AG04450 (cell line): ENCODE measurements at regions of chr1 and their contacts with region 1.

Region 1: DNA sequence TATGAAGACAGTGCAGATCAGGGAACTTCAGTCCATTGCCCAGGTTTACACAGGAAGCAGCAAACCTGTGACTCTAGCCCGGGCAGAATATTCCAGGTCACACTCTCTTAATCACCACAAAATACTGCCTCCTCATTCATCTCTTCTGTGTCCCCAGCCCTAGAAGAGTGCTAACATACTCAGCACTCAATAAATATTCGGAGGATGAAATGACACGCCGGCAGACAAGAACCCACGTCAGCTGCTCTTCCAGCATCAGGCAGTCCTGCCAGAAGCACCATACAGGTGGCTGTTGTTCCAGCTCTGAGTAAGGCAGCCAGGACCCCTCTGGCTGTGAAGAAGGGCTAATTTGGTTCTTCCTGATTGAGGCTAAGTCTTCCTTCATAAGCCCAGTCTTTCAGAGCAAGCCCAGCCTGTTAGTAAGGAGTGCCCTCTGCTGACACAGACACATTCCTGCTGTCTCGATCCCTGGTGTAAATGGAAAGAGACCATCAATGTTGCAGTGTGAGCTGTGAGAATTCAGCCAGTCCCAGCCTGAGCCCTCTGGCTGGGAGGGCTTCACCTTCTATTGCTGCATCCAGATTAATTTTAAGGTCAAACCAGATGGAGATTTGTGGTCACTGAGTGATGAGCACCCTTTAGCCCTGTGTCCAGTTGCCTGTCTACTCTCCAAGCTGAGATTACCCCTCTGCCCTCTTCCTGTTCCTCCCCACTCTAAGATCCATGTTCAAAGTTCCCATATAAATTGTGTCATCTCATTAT is 45.0 kb upstream of the KIRREL1 start:
- DNase-seq: no peak
- H3K4me3 ChIP-seq: no peak overlapping the region
- H3K27ac ChIP-seq: no peak overlapping the region
- H3K27me3 ChIP-seq: peaks cover 11% of the 10 kb centered on the region
- CTCF ChIP-seq: peak; percentile 63

Region 2: DNA sequence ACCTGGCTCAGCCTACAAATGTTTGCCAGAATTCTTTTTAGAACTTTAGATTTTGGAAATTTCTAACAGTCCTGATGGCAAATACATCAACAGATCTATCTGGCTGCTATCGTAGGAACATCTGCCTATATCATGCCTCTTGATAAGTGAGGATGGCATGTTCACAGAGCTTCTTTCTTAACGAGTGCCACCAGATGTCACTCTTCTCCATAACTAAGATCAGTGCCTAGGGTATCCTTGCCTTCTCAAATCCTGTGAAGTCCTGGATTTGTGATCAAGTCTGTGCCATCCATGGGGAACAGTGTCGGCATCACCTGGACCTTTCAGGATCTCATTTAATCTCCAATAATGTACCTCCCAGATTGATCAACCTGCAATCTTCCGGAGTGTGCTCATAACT is 70.4 kb before region 1 on chr1:
- CTCF ChIA-PET with region 1: interaction called, 10 read pairs
- POLR2A ChIA-PET with region 1: no interaction called
- DNase-seq: peak; percentile 7
- H3K4me3 ChIP-seq: no peak overlapping the region
- H3K27ac ChIP-seq: no peak overlapping the region
- H3K27me3 ChIP-seq: no peaks in the 10 kb centered on the region
- CTCF ChIP-seq: peak; percentile 46

Region 3: DNA sequence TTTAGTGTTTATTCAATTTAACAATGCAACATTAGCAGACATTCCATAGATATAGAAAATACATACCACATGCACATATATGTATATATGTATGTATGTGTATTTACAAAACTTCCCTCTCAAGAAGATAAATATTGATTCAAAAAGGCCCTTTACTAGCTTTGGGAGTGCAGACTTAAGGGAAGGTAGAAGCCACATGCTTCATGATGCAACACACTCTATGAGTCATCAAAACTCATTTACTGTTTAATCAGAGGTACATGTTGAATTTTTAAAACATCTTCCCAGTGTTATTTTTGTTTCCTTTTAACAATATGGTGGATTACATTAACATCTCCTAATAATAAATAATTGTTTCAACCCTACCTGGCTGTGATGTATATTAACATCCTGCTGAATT is 16.4 kb before region 1 on chr1:
- CTCF ChIA-PET with region 1: no interaction called
- POLR2A ChIA-PET with region 1: no interaction called
- DNase-seq: no peak
- H3K4me3 ChIP-seq: no peak overlapping the region
- H3K27ac ChIP-seq: no peak overlapping the region
- H3K27me3 ChIP-seq: no peaks in the 10 kb centered on the region
- CTCF ChIP-seq: no peak